Mammary epithelial cell (primary cell): ENCODE measurements at regions of chr17 and their contacts with region 1.

Region 1: GRCh38 chr17:49191917-49192741 is 18.2 kb downstream of the GNGT2 start:
- DNase-seq: peak; percentile 92
- H3K4me3 ChIP-seq: peak overlapping the region; percentile 71 to 78 (median 74)
- H3K27ac ChIP-seq: peak overlapping the region; percentile 81
- H3K4me1 ChIP-seq: peaks cover 4% of the 10 kb centered on the region
- H3K27me3 ChIP-seq: no peaks in the 10 kb centered on the region
- CTCF ChIP-seq: peak in 1 of 2 donors; percentile 30

Region 2: GRCh38 chr17:48892940-48893645 is 299.0 kb before region 1 on chr17:
- CTCF ChIA-PET with region 1: no interaction called
- dilution Hi-C with region 1: no loop called
- in situ Hi-C with region 1: no loop called
- intact Hi-C with region 1: loop called (anchors 5 kb)
- DNase-seq: no peak
- H3K4me3 ChIP-seq: peak overlapping the region; percentile 69 to 93 (median 85)
- H3K27ac ChIP-seq: peak overlapping the region; percentile 85
- H3K4me1 ChIP-seq: peaks cover 12% of the 10 kb centered on the region
- H3K27me3 ChIP-seq: no peaks in the 10 kb centered on the region
- CTCF ChIP-seq: no peak

Region 3: DNA sequence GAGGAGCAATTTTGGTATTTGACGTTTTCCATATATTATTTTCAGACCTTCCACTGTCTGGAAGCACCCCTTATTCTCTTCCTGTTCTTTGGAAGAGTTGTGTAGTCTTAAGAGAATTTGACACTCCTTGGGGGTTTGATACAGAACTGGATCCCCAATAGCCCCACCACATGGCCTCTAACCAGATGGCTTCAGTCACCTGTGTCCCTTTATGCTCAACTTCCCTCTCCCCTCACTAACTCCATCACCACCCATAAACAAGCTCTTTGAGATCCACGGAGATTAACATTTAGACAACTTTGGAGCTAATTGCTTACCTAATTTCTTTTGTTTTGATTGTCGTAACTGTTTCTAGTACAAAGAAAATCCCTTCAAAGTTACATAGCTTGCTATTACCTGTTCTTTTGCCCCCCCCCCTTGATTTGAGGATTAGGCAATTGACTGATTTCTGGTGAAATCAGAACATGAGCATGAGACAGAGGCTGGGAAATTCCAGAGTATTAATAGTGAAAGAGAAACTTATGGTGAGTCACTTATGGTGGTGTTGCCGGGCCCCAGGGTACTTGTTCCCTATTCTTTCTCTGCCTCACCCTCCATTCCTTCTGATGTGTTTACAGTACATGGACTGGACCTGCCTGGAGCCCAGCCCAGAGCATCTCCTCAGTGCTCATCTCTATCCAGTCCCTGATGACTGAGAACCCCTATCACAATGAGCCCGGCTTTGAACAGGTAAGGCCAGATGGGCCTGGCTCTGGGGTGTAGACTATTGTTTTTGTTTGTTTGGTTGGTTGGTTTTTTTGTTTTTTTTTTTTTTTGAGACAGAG is 276.5 kb before region 1 on chr17:
- CTCF ChIA-PET with region 1: no interaction called
- dilution Hi-C with region 1: no loop called
- in situ Hi-C with region 1: no loop called
- intact Hi-C with region 1: loop called (anchors 2 kb)
- DNase-seq: peak; percentile 96
- H3K4me3 ChIP-seq: no peak overlapping the region
- H3K27ac ChIP-seq: peak overlapping the region; percentile 96
- H3K4me1 ChIP-seq: peaks cover 27% of the 10 kb centered on the region
- H3K27me3 ChIP-seq: no peaks in the 10 kb centered on the region
- CTCF ChIP-seq: no peak

Region 4: GRCh38 chr17:49110509-49110908 is 81.6 kb before region 1 on chr17:
- CTCF ChIA-PET with region 1: interaction called, 3 read pairs
- dilution Hi-C with region 1: no loop called
- in situ Hi-C with region 1: no loop called
- intact Hi-C with region 1: loop called (anchors 5 kb)
- DNase-seq: peak; percentile 99
- H3K4me3 ChIP-seq: no peak overlapping the region
- H3K27ac ChIP-seq: peak overlapping the region; percentile 82
- H3K4me1 ChIP-seq: peaks cover 45% of the 10 kb centered on the region
- H3K27me3 ChIP-seq: no peaks in the 10 kb centered on the region
- CTCF ChIP-seq: no peak

Region 5: GRCh38 chr17:49132699-49133364 is 59.3 kb before region 1 on chr17 and contains the start of gene B4GALNT2:
- CTCF ChIA-PET with region 1: no interaction called
- dilution Hi-C with region 1: no loop called
- in situ Hi-C with region 1: no loop called
- intact Hi-C with region 1: loop called (anchors 5 kb)
- DNase-seq: peak; percentile 17
- H3K4me3 ChIP-seq: peak within 1 kb of the TSS; percentile 48 to 49 (median 49)
- H3K27ac ChIP-seq: no peak within 1 kb of the TSS
- H3K4me1 ChIP-seq: peaks cover 10% of the 10 kb centered on the region
- H3K27me3 ChIP-seq: no peaks in the 10 kb centered on the region
- CTCF ChIP-seq: no peak
- total RNA-seq, gene B4GALNT2: 0.14 to 0.17 TPM

Region 6: GRCh38 chr17:49146620-49147306 is 45.4 kb before region 1 on chr17:
- CTCF ChIA-PET with region 1: no interaction called
- dilution Hi-C with region 1: no loop called
- in situ Hi-C with region 1: no loop called
- intact Hi-C with region 1: loop called (anchors 1 kb)
- DNase-seq: peak; percentile 97
- H3K4me3 ChIP-seq: no peak overlapping the region
- H3K27ac ChIP-seq: peak overlapping the region; percentile 67
- H3K4me1 ChIP-seq: peaks cover 13% of the 10 kb centered on the region
- H3K27me3 ChIP-seq: no peaks in the 10 kb centered on the region
- CTCF ChIP-seq: no peak

Region 7: DNA sequence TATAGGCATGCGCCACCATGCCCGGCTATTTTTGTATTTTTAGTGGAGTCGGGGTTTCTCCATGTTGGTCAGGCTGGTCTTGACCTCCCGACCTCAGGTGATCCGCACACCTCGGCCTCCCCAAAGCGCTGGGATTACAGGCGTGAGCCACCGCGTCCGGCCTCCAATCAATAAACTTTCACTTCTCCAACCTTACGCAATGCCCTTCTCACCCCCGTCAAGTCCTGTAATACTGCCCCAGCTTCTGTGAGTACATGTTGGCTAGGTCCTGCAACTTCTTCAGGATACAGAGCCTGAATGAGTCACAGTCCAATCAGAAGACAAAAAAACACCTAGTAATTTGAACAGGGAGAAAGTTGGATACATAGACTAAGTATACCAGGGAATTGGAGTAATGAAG is 85.5 kb after region 1 on chr17:
- CTCF ChIA-PET with region 1: no interaction called
- dilution Hi-C with region 1: no loop called
- in situ Hi-C with region 1: no loop called
- intact Hi-C with region 1: no loop called
- DNase-seq: peak; percentile 11
- H3K4me3 ChIP-seq: no peak overlapping the region
- H3K27ac ChIP-seq: no peak overlapping the region
- H3K4me1 ChIP-seq: no peaks in the 10 kb centered on the region
- H3K27me3 ChIP-seq: no peaks in the 10 kb centered on the region
- CTCF ChIP-seq: no peak

Region 8: GRCh38 chr17:49299996-49300395 is 107.9 kb after region 1 on chr17:
- CTCF ChIA-PET with region 1: no interaction called
- dilution Hi-C with region 1: no loop called
- in situ Hi-C with region 1: no loop called
- intact Hi-C with region 1: no loop called
- DNase-seq: no peak
- H3K4me3 ChIP-seq: no peak overlapping the region
- H3K27ac ChIP-seq: no peak overlapping the region
- H3K4me1 ChIP-seq: no peaks in the 10 kb centered on the region
- H3K27me3 ChIP-seq: no peaks in the 10 kb centered on the region
- CTCF ChIP-seq: no peak

Region 9: GRCh38 chr17:49414622-49415350 is 222.7 kb after region 1 on chr17 and contains the start of gene PHB1:
- CTCF ChIA-PET with region 1: no interaction called
- dilution Hi-C with region 1: no loop called
- in situ Hi-C with region 1: no loop called
- intact Hi-C with region 1: no loop called
- DNase-seq: peak; percentile 97
- H3K4me3 ChIP-seq: peak within 1 kb of the TSS; percentile 82 to 86 (median 83)
- H3K27ac ChIP-seq: peak within 1 kb of the TSS; percentile 42
- H3K4me1 ChIP-seq: peaks cover 6% of the 10 kb centered on the region
- H3K27me3 ChIP-seq: no peaks in the 10 kb centered on the region
- CTCF ChIP-seq: no peak
- total RNA-seq, gene PHB1: 115 to 193 TPM